ENCODE measurements at regions of chr13 and their contacts with region 1.

Region 1: DNA sequence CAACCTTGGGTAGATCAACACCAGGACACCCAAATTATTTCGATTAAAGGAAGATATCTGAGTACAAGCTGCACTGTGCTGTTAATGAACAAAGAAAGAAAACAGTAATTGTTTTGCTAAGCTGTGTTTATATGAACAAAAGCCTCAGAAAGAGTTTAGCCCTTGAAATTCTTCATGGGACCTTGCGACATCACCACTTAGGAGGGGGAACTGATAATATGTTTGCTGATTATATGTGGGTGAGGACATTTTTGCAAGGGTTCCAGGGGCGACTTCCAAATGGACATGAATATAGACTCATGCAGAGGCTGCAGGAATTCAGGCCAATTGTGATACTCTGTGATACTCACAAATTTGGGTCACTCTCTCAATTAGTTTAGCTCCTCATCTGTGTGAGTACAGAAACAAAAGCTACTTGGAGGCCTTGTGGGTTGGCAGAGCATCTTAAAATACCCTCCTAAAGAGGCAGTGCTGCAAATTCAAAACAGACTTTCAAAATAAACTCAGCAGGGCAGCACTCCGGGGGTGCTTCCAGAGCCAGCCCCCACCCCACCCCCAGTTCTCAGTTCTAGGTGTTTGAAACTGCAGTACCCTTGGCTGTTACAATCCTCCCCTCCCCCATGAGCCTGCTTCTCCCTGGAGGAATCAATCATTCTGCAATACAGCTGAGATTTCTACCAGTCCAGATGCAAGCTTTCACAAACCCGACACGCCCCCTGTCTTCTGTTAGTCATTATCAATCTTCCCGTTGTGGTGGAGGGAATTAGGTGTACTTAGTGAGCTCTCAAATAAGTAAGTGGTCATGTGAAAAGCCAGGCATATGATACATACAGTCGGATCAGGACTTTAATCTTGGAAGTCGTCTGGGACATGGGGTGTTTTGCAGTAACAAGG is 97.0 kb upstream of the MBNL2 start:
- DNase-seq: peak; percentile 39 to 90
- H3K4me3 ChIP-seq: peak overlapping the region; percentile 37; the same call in 1 of the 2 replicates
- H3K27ac ChIP-seq: peak overlapping the region; percentile 81
- H3K4me1 ChIP-seq: peaks cover 81% of the 10 kb centered on the region
- H3K27me3 ChIP-seq: no peaks in the 10 kb centered on the region
- CTCF ChIP-seq: peak; percentile 55; the same call in 1 of the 2 replicates

Region 2: GRCh38 chr13:97212601-97213040 is 87.5 kb after region 1 on chr13:
- CTCF ChIA-PET with region 1: interaction called, 10 read pairs
- POLR2A ChIA-PET with region 1: no interaction called
- intact Hi-C with region 1: no loop called
- DNase-seq: peak; percentile 40 to 55
- H3K4me3 ChIP-seq: no peak overlapping the region
- H3K27ac ChIP-seq: peak overlapping the region; percentile 20; the same call in 1 of the 2 replicates
- H3K4me1 ChIP-seq: peaks cover 26% of the 10 kb centered on the region
- H3K27me3 ChIP-seq: no peaks in the 10 kb centered on the region
- CTCF ChIP-seq: peak; percentile 83

Region 3: GRCh38 chr13:97257800-97258799 is 132.9 kb after region 1 on chr13:
- CTCF ChIA-PET with region 1: interaction called, 4 read pairs
- POLR2A ChIA-PET with region 1: no interaction called
- intact Hi-C with region 1: loop called (anchors 1 kb)
- DNase-seq: peak; percentile 71 to 100
- H3K4me3 ChIP-seq: peak overlapping the region; percentile 34
- H3K27ac ChIP-seq: peak overlapping the region; percentile 98
- H3K4me1 ChIP-seq: peaks cover 82% of the 10 kb centered on the region
- H3K27me3 ChIP-seq: no peaks in the 10 kb centered on the region
- CTCF ChIP-seq: peak; percentile 56; the same call in 1 of the 2 replicates

Region 4: DNA sequence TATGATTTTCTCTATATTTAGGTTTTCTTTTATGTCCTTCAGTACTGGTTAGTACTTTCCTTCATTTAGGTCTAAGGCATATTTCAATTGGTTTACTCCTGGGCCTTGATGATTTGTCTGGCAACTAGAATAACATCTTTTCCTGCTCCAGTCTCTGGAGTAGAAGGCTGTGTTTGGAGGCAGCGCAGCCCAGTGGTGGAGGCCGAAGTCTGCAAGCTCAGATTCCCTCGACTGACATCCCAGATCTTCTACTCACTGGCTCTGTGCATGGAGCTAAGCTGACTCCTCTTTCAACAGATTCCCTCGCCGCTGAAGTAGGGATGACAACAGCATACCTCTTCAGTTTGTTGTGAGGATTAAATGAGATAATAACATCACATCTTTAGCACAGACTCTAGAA is 449.8 kb after region 1 on chr13:
- CTCF ChIA-PET with region 1: no interaction called
- POLR2A ChIA-PET with region 1: no interaction called
- intact Hi-C with region 1: no loop called
- DNase-seq: peak in 1 of 2 experiments; percentile 19
- H3K4me3 ChIP-seq: no peak overlapping the region
- H3K27ac ChIP-seq: no peak overlapping the region
- H3K4me1 ChIP-seq: no peaks in the 10 kb centered on the region
- H3K27me3 ChIP-seq: no peaks in the 10 kb centered on the region
- CTCF ChIP-seq: peak; percentile 70

Measured in PC-9 (cell line).